ENCODE measurements at regions of chr11 and their contacts with region 1.

Region 1: DNA sequence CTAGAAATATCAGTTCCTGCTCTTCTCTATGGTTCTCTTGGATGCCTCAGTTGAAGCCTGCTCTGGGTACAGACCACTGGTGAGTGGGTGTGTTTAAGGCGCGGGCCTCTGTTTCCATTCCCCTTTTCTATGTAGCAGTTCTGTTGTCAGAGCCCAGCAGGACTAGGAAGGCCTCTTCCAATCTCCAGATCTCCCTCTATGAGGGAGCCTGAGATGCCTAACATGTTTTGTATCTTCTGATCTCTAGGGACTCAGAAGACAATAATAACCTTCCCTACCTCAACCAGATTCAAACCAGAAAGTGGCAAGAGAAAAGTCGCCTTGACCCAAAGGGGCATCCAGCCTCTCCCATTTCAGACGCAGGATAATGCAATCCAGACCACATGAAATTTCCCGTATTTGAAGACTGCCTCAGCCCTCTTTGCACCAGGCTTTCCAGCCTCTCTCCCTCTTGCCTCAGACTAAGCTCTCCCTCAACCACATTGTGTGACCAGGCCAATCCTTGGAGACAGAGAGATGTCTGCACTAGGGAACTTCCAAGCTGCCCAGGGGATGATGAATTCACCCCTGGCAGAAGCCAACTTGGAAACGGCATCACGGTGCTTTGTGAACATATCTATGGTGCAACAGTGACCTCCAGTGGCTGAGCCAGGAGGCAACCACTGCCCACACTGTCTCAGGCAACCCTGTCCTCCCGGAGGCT is 150.1 kb upstream of the UBASH3B start:
- DNase-seq: peak; percentile 68
- H3K4me3 ChIP-seq: no peak overlapping the region
- H3K27ac ChIP-seq: no peak overlapping the region
- H3K4me1 ChIP-seq: no peaks in the 10 kb centered on the region
- H3K27me3 ChIP-seq: no peaks in the 10 kb centered on the region
- CTCF ChIP-seq: peak; percentile 59 to 71 (median 60)
- EP300 ChIP-seq: no peak
- POLR2A ChIP-seq: no peak

Region 2: GRCh38 chr11:121318848-121319834 is 1186.3 kb before region 1 on chr11:
- in situ Hi-C with region 1: loop called in 1 of 4 experiments (anchors 25 kb)
- intact Hi-C with region 1: no loop called
- DNase-seq: no peak
- H3K4me3 ChIP-seq: no peak overlapping the region
- H3K27ac ChIP-seq: no peak overlapping the region
- H3K4me1 ChIP-seq: peaks cover 0 to 4% (median 0%) of the 10 kb centered on the region in 4 donors
- H3K27me3 ChIP-seq: no peaks in the 10 kb centered on the region
- CTCF ChIP-seq: peak; percentile 67 to 90 (median 80)
- EP300 ChIP-seq: no peak
- POLR2A ChIP-seq: no peak

Region 3: DNA sequence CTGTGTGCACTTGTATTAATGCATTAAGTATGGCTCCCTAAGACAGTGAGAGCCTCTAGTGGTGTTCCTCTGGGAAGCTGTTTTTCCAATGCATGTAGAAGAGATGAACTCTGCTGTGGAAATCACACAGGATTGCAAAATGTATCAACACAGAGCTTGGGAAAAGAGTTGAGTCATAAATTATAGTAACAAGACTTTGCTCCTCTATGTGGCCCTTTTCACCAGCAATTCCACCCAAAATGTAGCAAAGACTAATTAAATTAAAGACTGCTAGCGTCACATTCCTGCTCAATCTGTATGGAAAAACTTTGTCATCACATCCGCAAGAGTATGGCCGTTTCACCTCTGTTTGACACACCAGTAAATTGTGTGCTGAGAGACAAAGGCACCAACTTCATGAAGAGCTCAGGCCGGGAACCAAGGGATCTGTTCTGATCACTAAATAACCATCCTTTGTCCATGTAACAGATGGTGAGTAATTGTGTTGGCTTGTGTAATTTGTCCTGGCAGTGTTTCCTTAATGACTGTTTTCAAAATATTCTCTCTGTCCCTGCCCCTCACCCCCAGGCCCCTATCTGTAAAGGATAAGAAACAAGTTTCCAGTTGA is 843.5 kb before region 1 on chr11:
- in situ Hi-C with region 1: loop called (anchors 10 to 25 kb)
- intact Hi-C with region 1: loop called (anchors 10 kb)
- DNase-seq: no peak
- H3K4me3 ChIP-seq: no peak overlapping the region
- H3K27ac ChIP-seq: peak overlapping the region in 3 of 4 donors; percentile 10 to 11 (median 10)
- H3K4me1 ChIP-seq: peaks cover 0 to 3% (median 0%) of the 10 kb centered on the region in 4 donors
- H3K27me3 ChIP-seq: no peaks in the 10 kb centered on the region
- CTCF ChIP-seq: no peak
- EP300 ChIP-seq: no peak
- POLR2A ChIP-seq: no peak

Region 4: GRCh38 chr11:122215244-122215992 is 290.0 kb before region 1 on chr11:
- in situ Hi-C with region 1: loop called (anchors 5 to 25 kb)
- intact Hi-C with region 1: loop called (anchors 2 kb)
- DNase-seq: peak; percentile 48
- H3K4me3 ChIP-seq: no peak overlapping the region
- H3K27ac ChIP-seq: peak overlapping the region in 1 of 4 donors; percentile 23
- H3K4me1 ChIP-seq: peaks cover 0 to 14% (median 3%) of the 10 kb centered on the region in 4 donors
- H3K27me3 ChIP-seq: no peaks in the 10 kb centered on the region
- CTCF ChIP-seq: peak; percentile 65 to 86 (median 80)
- EP300 ChIP-seq: no peak
- POLR2A ChIP-seq: no peak

Region 5: DNA sequence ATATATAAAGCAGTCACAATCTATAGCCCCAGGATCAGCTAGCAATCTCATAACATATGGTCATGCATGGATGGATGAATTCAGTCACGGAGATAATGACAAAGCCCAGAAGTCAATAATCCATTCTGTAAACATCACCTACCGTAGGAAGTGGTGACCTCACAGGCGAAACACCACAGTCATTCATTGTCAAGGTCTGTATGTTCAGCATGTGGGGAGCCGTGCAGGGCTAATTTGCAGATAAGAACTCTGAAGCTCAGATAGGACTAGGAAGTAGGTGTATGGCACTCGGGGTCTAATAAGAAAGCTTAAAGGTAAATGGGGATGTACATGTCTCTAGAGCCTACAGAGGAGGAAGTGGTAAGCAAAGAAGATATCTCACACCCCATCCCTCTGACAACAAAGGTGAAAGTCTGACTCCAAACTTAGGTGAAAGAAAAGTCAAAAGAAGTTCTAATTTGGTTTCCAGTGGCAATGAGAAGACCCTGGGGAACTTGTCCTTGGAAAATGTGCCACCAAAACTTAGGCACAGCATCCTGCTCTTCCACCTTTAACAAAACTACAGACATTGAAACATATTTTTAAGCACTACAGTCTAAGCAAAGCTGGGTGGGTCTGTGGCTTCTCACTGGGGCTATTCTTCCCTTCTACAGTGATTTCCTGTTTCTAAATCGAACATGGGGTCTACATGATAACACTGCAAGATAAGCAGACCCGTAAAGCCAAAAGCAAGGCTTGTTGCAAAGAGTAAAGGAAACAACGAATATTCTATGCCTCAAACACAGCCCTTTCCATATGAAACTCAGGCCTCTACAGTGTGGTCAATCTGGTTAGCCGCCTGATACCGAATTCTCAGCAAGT is 338.1 kb after region 1 on chr11:
- in situ Hi-C with region 1: no loop called
- intact Hi-C with region 1: no loop called
- DNase-seq: no peak
- H3K4me3 ChIP-seq: no peak overlapping the region
- H3K27ac ChIP-seq: no peak overlapping the region
- H3K4me1 ChIP-seq: no peaks in the 10 kb centered on the region
- H3K27me3 ChIP-seq: no peaks in the 10 kb centered on the region
- CTCF ChIP-seq: no peak
- EP300 ChIP-seq: no peak
- POLR2A ChIP-seq: no peak